Gastrocnemius medialis (tissue), 4 donors: ENCODE measurements at regions of chr19 and their contacts with region 1.

Region 1: GRCh38 chr19:41570639-41571112 is 5.3 kb upstream of the CEACAM21 start:
- DNase-seq: peak; percentile 9 to 38
- ATAC-seq: no peak
- H3K4me3 ChIP-seq: no peak overlapping the region
- H3K27ac ChIP-seq: no peak overlapping the region
- H3K4me1 ChIP-seq: no peaks in the 10 kb centered on the region
- H3K27me3 ChIP-seq: peaks cover 0 to 12% (median 0%) of the 10 kb centered on the region in 3 donors
- CTCF ChIP-seq: peak; percentile 31 to 71 (median 63)
- POLR2A ChIP-seq: no peak

Region 2: GRCh38 chr19:41449079-41449864 is 121.4 kb before region 1 on chr19:
- in situ Hi-C with region 1: loop called in 2 of 4 experiments (anchors 5 to 10 kb)
- intact Hi-C with region 1: loop called (anchors 1 kb)
- DNase-seq: peak; percentile 32 to 50
- ATAC-seq: peak; percentile 66 to 90
- H3K4me3 ChIP-seq: peak overlapping the region; percentile 28 to 45 (median 37)
- H3K27ac ChIP-seq: no peak overlapping the region
- H3K4me1 ChIP-seq: peaks cover 0 to 6% of the 10 kb centered on the region in 2 donors
- H3K27me3 ChIP-seq: no peaks in the 10 kb centered on the region
- CTCF ChIP-seq: peak; percentile 86 to 98 (median 92)
- POLR2A ChIP-seq: no peak

Region 3: DNA sequence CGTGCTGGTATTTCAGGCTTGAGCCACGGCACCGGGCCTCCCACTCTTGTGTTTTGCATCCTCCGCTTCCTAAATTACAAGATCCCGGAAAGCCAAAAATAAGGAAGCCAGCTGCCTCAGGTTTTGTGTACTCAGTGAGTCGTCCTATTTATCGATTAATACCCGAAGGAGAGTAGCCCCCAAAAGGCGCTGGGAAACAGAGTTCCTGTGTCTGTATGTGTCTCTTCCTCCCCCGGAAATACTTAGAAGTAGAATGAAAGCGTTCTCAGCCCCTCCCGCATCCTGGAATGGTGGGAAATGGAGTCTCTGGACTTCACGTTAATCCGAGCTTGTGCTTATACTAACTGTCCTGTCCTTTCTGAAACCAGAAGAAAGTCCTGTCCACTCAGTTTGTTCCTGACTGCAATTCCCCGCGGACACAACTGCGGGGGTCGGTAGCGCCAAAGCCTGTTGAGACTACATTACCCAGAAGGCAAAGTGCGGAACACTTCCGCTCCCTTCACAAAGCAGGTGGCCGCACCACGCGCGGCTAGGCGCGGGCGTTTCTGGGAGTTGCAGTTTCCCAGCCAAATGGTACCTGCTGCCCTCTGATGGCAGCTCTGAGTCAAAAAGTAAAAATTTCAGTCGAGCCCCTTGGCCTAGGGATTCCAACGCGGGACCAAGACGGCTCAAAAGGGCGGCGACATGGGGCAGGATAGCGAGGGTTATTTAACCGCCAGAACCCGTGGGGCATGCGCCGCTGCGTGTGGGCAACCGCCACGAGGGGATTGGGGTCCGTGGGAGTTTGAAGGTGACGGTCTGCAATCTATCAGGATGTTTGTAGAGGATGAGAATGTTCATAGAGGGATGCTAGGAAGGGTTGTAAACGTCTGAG is 673.9 kb after region 1 on chr19:
- in situ Hi-C with region 1: no loop called
- intact Hi-C with region 1: no loop called
- DNase-seq: peak; percentile 87 to 89
- ATAC-seq: peak; percentile 53 to 54
- H3K4me3 ChIP-seq: peak overlapping the region; percentile 55 to 77 (median 73)
- H3K27ac ChIP-seq: peak overlapping the region; percentile 86 to 95 (median 87)
- H3K4me1 ChIP-seq: peaks cover 36 to 39% of the 10 kb centered on the region in 2 donors
- H3K27me3 ChIP-seq: no peaks in the 10 kb centered on the region
- CTCF ChIP-seq: peak; percentile 40 to 77 (median 64)
- POLR2A ChIP-seq: peak; percentile 59 to 71